B cell (primary cell): ENCODE measurements at regions of chr5 and their contacts with region 1.

Region 1: DNA sequence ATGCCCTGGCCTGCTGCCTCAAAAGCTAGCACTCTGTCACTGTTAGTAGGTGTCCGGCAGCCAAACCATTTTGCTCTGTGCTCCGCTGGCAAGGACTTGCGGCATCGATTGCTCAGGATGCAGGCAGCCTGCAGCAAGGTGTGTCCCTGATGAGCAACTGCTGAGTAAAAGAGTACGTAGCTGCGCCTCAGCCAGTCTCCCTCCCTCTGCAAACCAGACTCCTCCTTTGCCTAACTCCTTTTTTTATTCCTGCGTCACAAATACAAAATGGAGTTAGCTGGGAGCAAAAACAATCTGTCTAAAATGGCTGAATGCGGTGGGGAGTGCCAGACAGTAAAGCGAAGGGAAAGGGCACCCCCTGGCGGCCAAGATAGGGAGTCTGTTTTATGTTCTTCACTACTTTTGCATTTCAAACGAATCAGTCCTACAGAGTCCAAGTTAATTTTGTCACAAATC is 61.1 kb downstream of the DIAPH1 start:
- DNase-seq: peak; percentile 80
- ATAC-seq: peak; percentile 81
- H3K4me3 ChIP-seq: no peak overlapping the region
- H3K4me3 Mint-ChIP-seq: no peak overlapping the region
- H3K27ac ChIP-seq: no peak overlapping the region
- H3K27ac Mint-ChIP-seq: peak overlapping the region; percentile 80
- H3K4me1 ChIP-seq: no peaks in the 10 kb centered on the region
- H3K4me1 Mint-ChIP-seq: peaks cover 4% of the 10 kb centered on the region
- H3K27me3 ChIP-seq: no peaks in the 10 kb centered on the region
- H3K27me3 Mint-ChIP-seq: no peaks in the 10 kb centered on the region
- CTCF ChIP-seq: peak; percentile 82

Region 2: GRCh38 chr5:141369994-141370848 is 187.5 kb before region 1 on chr5 and contains the start of gene PCDHGB3:
- CTCF ChIA-PET with region 1: interaction called, 17 read pairs
- POLR2A ChIA-PET with region 1: no interaction called
- intact Hi-C with region 1: loop called (anchors 1 kb)
- DNase-seq: peak; percentile 54
- ATAC-seq: peak; percentile 74
- H3K4me3 ChIP-seq: peak within 1 kb of the TSS in 4 of 5 experiments; percentile 23 to 55 (median 38)
- H3K4me3 Mint-ChIP-seq: peak within 1 kb of the TSS; percentile 82
- H3K27ac ChIP-seq: no peak within 1 kb of the TSS
- H3K27ac Mint-ChIP-seq: peak within 1 kb of the TSS; percentile 39
- H3K4me1 ChIP-seq: peaks cover 0 to 5% of the 10 kb centered on the region in 2 donors
- H3K4me1 Mint-ChIP-seq: peaks cover 8% of the 10 kb centered on the region
- H3K27me3 ChIP-seq: peaks cover 0 to 65% (median 39%) of the 10 kb centered on the region in 4 experiments
- H3K27me3 Mint-ChIP-seq: peaks cover 53% of the 10 kb centered on the region
- CTCF ChIP-seq: peak; percentile 38
- total RNA-seq, gene PCDHGB3: 2.8 and 3.8 TPM in 2 replicates

Region 3: DNA sequence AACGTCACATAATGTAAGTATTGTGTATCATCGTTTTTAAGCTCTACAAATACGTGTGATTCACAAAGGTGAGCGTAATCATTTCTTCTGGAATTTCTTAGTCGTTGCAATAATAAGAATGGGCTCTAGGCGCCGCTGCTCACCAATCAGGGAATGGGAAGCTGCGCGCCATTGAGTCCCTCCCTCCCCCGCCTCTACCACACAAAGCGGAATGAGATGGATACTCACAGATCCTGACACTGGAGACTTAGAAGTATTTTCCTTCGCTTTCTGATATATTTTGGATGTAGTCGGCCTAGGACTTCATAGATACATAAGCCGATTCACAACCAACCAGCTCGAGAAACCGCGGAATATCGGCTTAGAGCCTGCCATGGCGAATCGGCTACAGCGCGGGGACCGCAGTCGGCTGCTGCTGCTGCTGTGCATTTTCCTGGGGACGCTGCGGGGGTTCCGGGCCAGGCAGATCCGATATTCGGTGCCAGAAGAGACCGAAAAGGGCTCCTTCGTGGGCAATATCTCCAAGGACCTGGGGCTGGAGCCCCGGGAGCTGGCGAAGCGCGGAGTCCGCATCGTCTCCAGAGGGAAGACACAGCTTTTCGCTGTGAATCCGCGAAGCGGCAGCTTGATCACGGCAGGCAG is 136.7 kb before region 1 on chr5 and contains the start of gene PCDHGA11:
- CTCF ChIA-PET with region 1: interaction called, 56 read pairs
- POLR2A ChIA-PET with region 1: no interaction called
- intact Hi-C with region 1: loop called (anchors 1 kb)
- DNase-seq: peak; percentile 68
- ATAC-seq: peak; percentile 68
- H3K4me3 ChIP-seq: peak within 1 kb of the TSS; percentile 24 to 53 (median 52)
- H3K4me3 Mint-ChIP-seq: peak within 1 kb of the TSS; percentile 87
- H3K27ac ChIP-seq: no peak within 1 kb of the TSS
- H3K27ac Mint-ChIP-seq: peak within 1 kb of the TSS; percentile 48
- H3K4me1 ChIP-seq: peaks cover 10 to 12% of the 10 kb centered on the region in 2 donors
- H3K4me1 Mint-ChIP-seq: peaks cover 15% of the 10 kb centered on the region
- H3K27me3 ChIP-seq: peaks cover 2 to 71% (median 58%) of the 10 kb centered on the region in 4 experiments
- H3K27me3 Mint-ChIP-seq: peaks cover 57% of the 10 kb centered on the region
- CTCF ChIP-seq: peak; percentile 72
- total RNA-seq, gene PCDHGA11: 1.5 and 1.8 TPM in 2 replicates

Region 4: GRCh38 chr5:141475625-141476131 is 82.0 kb before region 1 on chr5 and contains the start of gene PCDHGC3:
- CTCF ChIA-PET with region 1: interaction called, 19 read pairs
- POLR2A ChIA-PET with region 1: no interaction called
- intact Hi-C with region 1: no loop called
- DNase-seq: peak; percentile 65
- ATAC-seq: peak; percentile 95
- H3K4me3 ChIP-seq: peak within 1 kb of the TSS; percentile 35 to 64 (median 49)
- H3K4me3 Mint-ChIP-seq: peak within 1 kb of the TSS; percentile 95
- H3K27ac ChIP-seq: no peak within 1 kb of the TSS
- H3K27ac Mint-ChIP-seq: peak within 1 kb of the TSS; percentile 47
- H3K4me1 ChIP-seq: peaks cover 23 to 32% of the 10 kb centered on the region in 2 donors
- H3K4me1 Mint-ChIP-seq: peaks cover 29% of the 10 kb centered on the region
- H3K27me3 ChIP-seq: peaks cover 0 to 47% (median 30%) of the 10 kb centered on the region in 4 experiments
- H3K27me3 Mint-ChIP-seq: peaks cover 36% of the 10 kb centered on the region
- CTCF ChIP-seq: no peak
- total RNA-seq, gene PCDHGC3: 1.9 and 2.0 TPM in 2 replicates

Region 5: DNA sequence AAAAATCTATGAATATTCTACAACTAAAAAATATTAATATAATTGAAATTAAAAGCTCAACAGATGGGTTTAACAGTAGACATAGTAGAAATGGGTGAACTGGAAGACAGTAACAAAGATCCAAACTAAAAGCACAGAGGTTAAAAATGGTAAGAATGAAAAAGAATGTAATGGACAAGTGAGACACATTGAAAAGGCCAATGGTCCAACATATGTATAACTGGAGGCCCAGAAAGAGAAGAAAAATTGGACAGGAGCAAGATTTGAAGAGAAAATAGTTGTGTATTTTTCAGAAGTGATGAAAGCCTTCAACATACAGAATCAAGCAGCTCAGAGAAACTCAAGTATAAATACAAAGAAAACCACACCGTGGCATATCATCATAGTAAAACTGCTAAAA is 10.2 kb before region 1 on chr5:
- CTCF ChIA-PET with region 1: interaction called, 13 read pairs
- POLR2A ChIA-PET with region 1: no interaction called
- intact Hi-C with region 1: no loop called
- DNase-seq: no peak
- ATAC-seq: no peak
- H3K4me3 ChIP-seq: no peak overlapping the region
- H3K4me3 Mint-ChIP-seq: no peak overlapping the region
- H3K27ac ChIP-seq: no peak overlapping the region
- H3K27ac Mint-ChIP-seq: no peak overlapping the region
- H3K4me1 ChIP-seq: no peaks in the 10 kb centered on the region
- H3K4me1 Mint-ChIP-seq: peaks cover 6% of the 10 kb centered on the region
- H3K27me3 ChIP-seq: no peaks in the 10 kb centered on the region
- H3K27me3 Mint-ChIP-seq: no peaks in the 10 kb centered on the region
- CTCF ChIP-seq: no peak

Region 6: GRCh38 chr5:141628175-141628788 is 70.6 kb after region 1 on chr5:
- CTCF ChIA-PET with region 1: no interaction called
- POLR2A ChIA-PET with region 1: no interaction called
- intact Hi-C with region 1: no loop called
- DNase-seq: no peak
- ATAC-seq: no peak
- H3K4me3 ChIP-seq: no peak overlapping the region
- H3K4me3 Mint-ChIP-seq: no peak overlapping the region
- H3K27ac ChIP-seq: no peak overlapping the region
- H3K27ac Mint-ChIP-seq: no peak overlapping the region
- H3K4me1 ChIP-seq: peaks cover 7 to 8% of the 10 kb centered on the region in 2 donors
- H3K4me1 Mint-ChIP-seq: peaks cover 10% of the 10 kb centered on the region
- H3K27me3 ChIP-seq: no peaks in the 10 kb centered on the region
- H3K27me3 Mint-ChIP-seq: no peaks in the 10 kb centered on the region
- CTCF ChIP-seq: no peak